ENCODE measurements at regions of chr5 and their contacts with region 1.

Region 1: GRCh38 chr5:34522599-34523386 is 133.3 kb upstream of the RAI14 start:
- DNase-seq: peak; percentile 79
- H3K4me3 ChIP-seq: no peak overlapping the region
- H3K27ac ChIP-seq: peak overlapping the region; percentile 54
- H3K27me3 ChIP-seq: no peaks in the 10 kb centered on the region
- CTCF ChIP-seq: peak; percentile 74

Region 2: GRCh38 chr5:34012791-34013190 is 510.0 kb before region 1 on chr5:
- CTCF ChIA-PET with region 1: no interaction called
- POLR2A ChIA-PET with region 1: no interaction called
- DNase-seq: no peak
- H3K4me3 ChIP-seq: no peak overlapping the region
- H3K27ac ChIP-seq: no peak overlapping the region
- H3K27me3 ChIP-seq: no peaks in the 10 kb centered on the region
- CTCF ChIP-seq: no peak

Region 3: DNA sequence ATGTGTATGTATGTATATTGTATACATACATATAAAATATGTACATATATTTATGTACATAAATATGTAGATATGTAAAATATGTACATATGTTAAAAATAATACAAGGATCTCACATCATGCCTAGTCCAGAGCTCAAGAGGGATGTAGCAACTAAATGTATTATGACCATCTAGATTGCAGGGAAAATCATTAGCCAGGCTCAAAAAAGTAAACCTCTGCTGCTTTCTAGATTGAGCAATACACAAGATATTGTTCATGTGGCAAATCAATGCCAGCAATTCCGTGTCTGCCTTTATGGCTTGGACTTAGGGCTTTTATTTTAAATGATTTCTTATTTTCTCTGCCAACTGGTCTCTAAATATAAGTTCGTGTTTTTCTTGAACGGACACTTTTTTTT is 198.5 kb after region 1 on chr5:
- CTCF ChIA-PET with region 1: interaction called, 11 read pairs
- POLR2A ChIA-PET with region 1: interaction called, 5 read pairs
- DNase-seq: no peak
- H3K4me3 ChIP-seq: no peak overlapping the region
- H3K27ac ChIP-seq: no peak overlapping the region
- H3K27me3 ChIP-seq: no peaks in the 10 kb centered on the region
- CTCF ChIP-seq: no peak